Activated CD8-positive, alpha-beta T cell treated with anti-CD3 and anti-CD28 coated beads for 36 hours (primary cell): ENCODE measurements at regions of chr16 and their contacts with region 1.

Region 1: DNA sequence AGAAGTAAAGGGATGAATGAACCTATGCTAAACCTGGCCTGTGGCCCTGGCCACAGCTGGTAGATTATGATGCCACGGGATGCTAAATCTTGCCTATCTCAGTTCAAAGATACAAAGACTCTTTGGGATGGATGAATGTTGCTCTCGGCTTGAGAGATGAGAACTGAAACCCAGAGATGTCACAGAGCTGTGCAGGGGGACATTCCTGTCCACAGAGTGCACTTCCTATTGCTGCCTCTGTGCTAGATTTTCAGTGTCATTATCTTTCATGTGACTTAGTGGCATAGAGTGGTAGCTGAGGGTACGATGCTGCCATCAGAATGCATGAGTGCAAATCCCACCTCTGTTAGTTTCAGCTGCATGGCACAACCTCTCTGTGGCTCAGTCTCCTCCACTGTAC is 2.3 kb upstream of the MT1M start:
- DNase-seq: no peak
- ATAC-seq: peak; percentile 39
- H3K4me3 Mint-ChIP-seq: no peak overlapping the region
- H3K27ac Mint-ChIP-seq: no peak overlapping the region
- H3K4me1 Mint-ChIP-seq: peaks cover 23% of the 10 kb centered on the region
- H3K27me3 Mint-ChIP-seq: peaks cover 59% of the 10 kb centered on the region
- CTCF ChIP-seq: no peak

Region 2: GRCh38 chr16:56589141-56590039 is 40.7 kb before region 1 on chr16 and contains the start of gene MT3:
- CTCF ChIA-PET with region 1: no interaction called
- POLR2A ChIA-PET with region 1: no interaction called
- intact Hi-C with region 1: no loop called
- DNase-seq: peak; percentile 68
- ATAC-seq: peak; percentile 89
- H3K4me3 Mint-ChIP-seq: peak within 1 kb of the TSS; percentile 78
- H3K27ac Mint-ChIP-seq: peak within 1 kb of the TSS; percentile 2
- H3K4me1 Mint-ChIP-seq: peaks cover 9% of the 10 kb centered on the region
- H3K27me3 Mint-ChIP-seq: peaks cover 12% of the 10 kb centered on the region
- CTCF ChIP-seq: no peak
- total RNA-seq, gene MT3: 30.7 to 33.6 TPM

Region 3: GRCh38 chr16:56617177-56618085 is 12.7 kb before region 1 on chr16:
- CTCF ChIA-PET with region 1: interaction called, 11 read pairs
- POLR2A ChIA-PET with region 1: interaction called, 9 read pairs
- intact Hi-C with region 1: no loop called
- DNase-seq: peak; percentile 81
- ATAC-seq: peak; percentile 76
- H3K4me3 Mint-ChIP-seq: peak overlapping the region; percentile 66
- H3K27ac Mint-ChIP-seq: no peak overlapping the region
- H3K4me1 Mint-ChIP-seq: peaks cover 42% of the 10 kb centered on the region
- H3K27me3 Mint-ChIP-seq: peaks cover 12% of the 10 kb centered on the region
- CTCF ChIP-seq: no peak